Activated CD4-positive, alpha-beta memory T cell treated with anti-CD3 and anti-CD28 coated beads for 36 hours (primary cell): ENCODE measurements at regions of chr1 and their contacts with region 1.

Region 1: DNA sequence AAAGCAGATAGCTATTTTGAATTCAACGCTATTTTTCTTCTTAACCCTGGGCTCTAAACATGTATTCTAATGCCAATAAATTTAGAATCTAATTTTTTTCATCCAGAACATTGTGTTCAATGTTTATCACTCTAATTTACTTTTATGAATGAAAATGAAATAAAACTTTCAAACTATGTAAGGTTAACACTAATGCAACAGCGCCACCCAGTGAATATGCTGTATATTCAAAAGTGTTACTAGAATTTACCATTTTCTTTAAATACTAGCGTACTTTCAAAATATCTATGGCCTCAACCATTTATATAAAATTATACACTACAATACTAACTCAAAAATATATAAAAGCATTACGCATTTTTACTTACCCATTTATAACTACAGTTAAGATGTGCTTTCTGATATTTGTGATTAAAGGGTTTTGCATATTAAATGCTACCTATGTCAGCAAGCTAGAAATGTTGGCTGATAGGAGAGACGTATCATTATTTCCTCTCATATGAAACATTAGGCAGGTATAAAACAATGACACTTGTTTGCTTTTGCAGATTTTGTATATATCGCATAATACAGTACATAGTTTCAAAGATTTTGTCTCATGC is 5.9 kb upstream of the NUF2 start:
- DNase-seq: peak; percentile 23
- H3K4me3 Mint-ChIP-seq: no peak overlapping the region
- H3K27ac Mint-ChIP-seq: no peak overlapping the region
- H3K4me1 Mint-ChIP-seq: peaks cover 6% of the 10 kb centered on the region
- H3K27me3 Mint-ChIP-seq: no peaks in the 10 kb centered on the region

Region 2: DNA sequence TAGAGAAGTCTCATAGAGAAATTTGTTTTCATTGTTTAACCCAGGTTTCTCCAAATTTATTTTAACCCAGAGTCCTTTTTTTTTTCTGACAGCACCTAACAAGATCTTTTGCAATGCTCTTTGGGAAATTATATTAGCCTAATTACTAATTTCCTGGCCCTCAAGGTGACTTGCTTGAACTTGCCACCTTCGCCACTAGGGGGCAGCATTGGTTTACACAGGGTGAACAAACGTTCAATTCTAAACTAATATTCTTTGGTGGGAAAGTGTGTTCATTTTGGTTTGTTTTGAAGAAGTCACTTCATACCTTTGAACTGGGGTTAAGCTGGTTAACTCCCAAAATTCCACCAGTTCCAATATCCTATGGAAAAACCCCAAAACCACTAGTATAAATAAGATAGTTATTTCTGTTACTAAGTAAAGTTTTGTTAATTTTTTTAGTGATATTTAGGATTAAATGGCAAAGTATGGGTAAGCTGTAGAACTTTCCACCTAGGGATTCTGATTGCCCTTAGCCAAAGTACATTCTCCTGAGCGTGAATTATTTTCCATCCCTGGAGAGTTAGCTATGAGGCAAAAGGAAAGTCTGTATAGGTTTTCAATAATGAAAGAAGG is 467.9 kb before region 1 on chr1:
- CTCF ChIA-PET with region 1: interaction called, 45 read pairs
- POLR2A ChIA-PET with region 1: no interaction called
- intact Hi-C with region 1: no loop called
- DNase-seq: peak; percentile 80
- H3K4me3 Mint-ChIP-seq: no peak overlapping the region
- H3K27ac Mint-ChIP-seq: no peak overlapping the region
- H3K4me1 Mint-ChIP-seq: no peaks in the 10 kb centered on the region
- H3K27me3 Mint-ChIP-seq: peaks cover 1% of the 10 kb centered on the region

Region 3: GRCh38 chr1:162854245-162854882 is 461.5 kb before region 1 on chr1:
- CTCF ChIA-PET with region 1: interaction called, 45 read pairs
- POLR2A ChIA-PET with region 1: no interaction called
- intact Hi-C with region 1: loop called (anchors 1 kb)
- DNase-seq: peak; percentile 63
- H3K4me3 Mint-ChIP-seq: no peak overlapping the region
- H3K27ac Mint-ChIP-seq: no peak overlapping the region
- H3K4me1 Mint-ChIP-seq: no peaks in the 10 kb centered on the region
- H3K27me3 Mint-ChIP-seq: peaks cover 1% of the 10 kb centered on the region

Region 4: DNA sequence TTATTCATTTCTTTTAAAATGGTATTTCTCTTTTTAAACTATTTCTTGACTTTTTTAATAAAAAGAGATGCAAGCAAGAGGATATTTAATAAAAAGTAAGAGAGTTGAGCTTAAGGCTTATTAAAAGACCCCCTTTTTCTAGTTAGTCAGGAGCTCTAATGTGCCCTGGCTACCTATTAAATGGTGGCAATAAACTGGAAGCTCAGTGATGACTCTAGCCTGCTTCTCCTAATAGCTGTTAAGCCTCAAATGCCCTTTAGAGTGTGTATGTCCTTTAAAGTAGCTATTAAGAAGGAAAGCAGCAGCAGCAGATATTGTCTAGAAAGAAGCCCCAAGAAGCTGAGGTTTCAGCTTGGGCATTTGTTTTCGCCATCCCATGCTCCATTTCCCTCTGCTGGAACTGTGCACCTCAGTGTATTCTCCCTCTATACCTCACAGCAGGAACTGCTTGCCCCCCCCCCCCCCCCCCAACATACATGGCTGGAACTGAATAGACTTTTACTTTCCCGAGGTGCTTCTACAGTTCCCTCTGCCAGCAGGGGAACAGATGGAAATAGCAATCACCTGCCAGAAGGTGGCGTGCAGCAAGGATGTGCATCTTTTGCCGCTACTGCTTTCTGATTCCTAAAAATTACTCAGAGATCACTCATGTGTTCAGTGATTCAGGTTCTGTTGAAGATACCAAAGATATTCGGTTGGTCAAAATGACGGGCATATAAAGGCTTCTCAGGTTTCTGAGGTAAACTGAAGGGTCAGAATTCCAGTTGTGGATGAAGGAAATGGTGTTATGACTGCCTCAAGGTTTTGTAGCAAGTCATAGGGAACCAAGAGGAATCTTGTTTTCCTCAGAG is 244.2 kb before region 1 on chr1:
- CTCF ChIA-PET with region 1: interaction called, 40 read pairs
- POLR2A ChIA-PET with region 1: no interaction called
- intact Hi-C with region 1: loop called (anchors 1 kb)
- DNase-seq: peak; percentile 55
- H3K4me3 Mint-ChIP-seq: no peak overlapping the region
- H3K27ac Mint-ChIP-seq: no peak overlapping the region
- H3K4me1 Mint-ChIP-seq: no peaks in the 10 kb centered on the region
- H3K27me3 Mint-ChIP-seq: peaks cover 23% of the 10 kb centered on the region

Region 5: DNA sequence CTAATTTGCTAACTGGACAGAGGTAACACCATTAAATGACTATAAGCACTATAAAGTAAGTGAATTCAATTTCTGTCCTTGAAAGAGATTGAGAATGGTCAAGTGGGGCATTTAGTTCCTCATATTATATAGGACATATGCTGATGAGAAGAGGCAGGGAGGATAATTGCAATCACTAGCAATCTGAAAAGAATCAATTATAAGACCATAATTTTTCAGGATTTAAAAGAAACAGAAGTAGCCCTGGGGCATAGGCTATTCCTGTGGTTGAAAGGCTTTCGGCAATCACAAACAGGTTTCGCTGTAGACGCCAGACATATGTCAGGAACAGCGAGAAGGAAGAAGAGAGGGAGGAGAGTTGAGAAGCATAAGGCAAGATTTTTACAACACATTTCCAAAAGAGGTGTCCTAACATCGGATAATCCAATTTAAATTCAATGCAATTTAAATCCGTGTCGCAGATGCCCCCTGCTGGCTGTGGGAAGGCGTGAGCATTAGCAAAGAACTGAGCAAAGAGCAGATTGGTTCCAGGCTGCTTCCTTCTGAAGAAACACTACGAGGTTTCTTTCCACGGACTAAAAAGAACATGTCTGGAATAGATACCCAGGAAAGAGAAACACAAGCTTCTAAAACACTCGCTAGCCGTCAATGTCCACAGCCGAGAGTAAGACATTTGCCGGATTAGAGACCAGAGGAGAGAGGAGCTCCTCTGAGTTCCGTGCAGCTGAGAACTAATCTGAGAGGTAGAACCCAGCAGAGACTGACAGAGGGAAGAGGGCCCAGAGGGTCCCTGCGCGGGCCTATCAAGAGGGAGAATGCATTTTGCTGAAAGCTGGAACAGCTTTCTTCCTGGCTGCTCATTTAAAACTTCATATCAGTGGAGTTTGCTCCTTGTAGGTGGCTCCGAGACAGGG is 141.1 kb before region 1 on chr1:
- CTCF ChIA-PET with region 1: interaction called, 8 read pairs
- POLR2A ChIA-PET with region 1: no interaction called
- intact Hi-C with region 1: loop called (anchors 5 kb)
- DNase-seq: peak; percentile 59
- H3K4me3 Mint-ChIP-seq: no peak overlapping the region
- H3K27ac Mint-ChIP-seq: no peak overlapping the region
- H3K4me1 Mint-ChIP-seq: no peaks in the 10 kb centered on the region
- H3K27me3 Mint-ChIP-seq: peaks cover 6% of the 10 kb centered on the region

Region 6: DNA sequence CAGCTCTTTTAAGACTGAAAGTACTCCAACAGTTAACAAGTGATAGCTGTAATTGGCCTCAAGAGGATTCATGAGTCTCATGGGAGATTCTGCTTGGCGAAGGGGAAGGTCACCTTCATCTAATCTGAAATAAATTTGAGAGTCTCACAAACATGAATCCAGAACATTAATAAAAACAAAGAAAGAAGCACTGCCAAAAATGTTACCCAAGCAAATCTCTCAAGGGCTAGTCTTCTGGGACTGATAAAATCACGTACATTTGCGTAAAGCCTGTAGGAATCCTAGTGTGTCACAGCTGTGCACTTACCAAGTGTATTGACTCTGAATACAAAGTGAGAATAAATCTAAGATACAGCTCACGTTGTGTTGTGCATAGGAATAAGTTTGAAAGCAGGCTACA is 15.3 kb before region 1 on chr1:
- CTCF ChIA-PET with region 1: interaction called, 10 read pairs
- POLR2A ChIA-PET with region 1: no interaction called
- intact Hi-C with region 1: no loop called
- DNase-seq: no peak
- H3K4me3 Mint-ChIP-seq: no peak overlapping the region
- H3K27ac Mint-ChIP-seq: no peak overlapping the region
- H3K4me1 Mint-ChIP-seq: no peaks in the 10 kb centered on the region
- H3K27me3 Mint-ChIP-seq: no peaks in the 10 kb centered on the region